Lower leg skin (tissue), 4 donors: ENCODE measurements at regions of chr1 and their contacts with region 1.

Region 1: GRCh38 chr1:164601399-164602374 is 42.7 kb downstream of the PBX1 start:
- DNase-seq: peak in 1 of 2 donors; percentile 65
- H3K4me3 ChIP-seq: no peak overlapping the region
- CTCF ChIP-seq: no peak
- POLR2A ChIP-seq: no peak

Region 2: GRCh38 chr1:164588516-164589341 is 13.0 kb before region 1 on chr1:
- intact Hi-C with region 1: loop called (anchors 1 kb)
- DNase-seq: peak in 1 of 2 donors; percentile 91
- H3K4me3 ChIP-seq: no peak overlapping the region
- CTCF ChIP-seq: no peak
- POLR2A ChIP-seq: no peak

Region 3: GRCh38 chr1:164660412-164660772 is 58.7 kb after region 1 on chr1:
- intact Hi-C with region 1: no loop called
- DNase-seq: no peak
- H3K4me3 ChIP-seq: no peak overlapping the region
- CTCF ChIP-seq: no peak
- POLR2A ChIP-seq: no peak